IMR-90 (cell line): ENCODE measurements at regions of chr4 and their contacts with region 1.

Region 1: DNA sequence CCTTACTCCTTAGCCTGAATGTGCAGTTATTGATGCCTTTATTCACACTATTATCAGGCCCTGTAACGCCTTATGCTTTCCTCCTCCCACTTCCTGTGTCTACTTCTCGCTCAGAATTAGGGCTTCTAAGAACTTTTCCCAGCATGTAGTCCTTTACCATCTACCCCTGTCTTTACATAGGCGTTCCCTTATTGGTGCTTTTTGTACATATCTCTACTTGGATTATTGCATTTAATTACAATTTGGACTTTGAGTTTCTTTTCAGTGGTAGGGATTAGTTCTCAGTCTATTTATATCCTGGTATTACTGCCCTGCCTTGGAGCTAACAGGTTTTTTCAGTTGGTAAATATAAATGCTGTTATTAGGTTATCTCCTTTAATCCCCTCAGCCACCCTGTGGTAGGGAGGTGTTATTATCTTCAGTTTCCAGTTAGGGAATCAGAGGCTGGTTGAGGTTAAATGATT is 84.0 kb downstream of the RBPJ start:
- DNase-seq: no peak
- ATAC-seq: no peak
- H3K4me3 ChIP-seq: no peak overlapping the region
- H3K27ac ChIP-seq: no peak overlapping the region
- H3K4me1 ChIP-seq: no peaks in the 10 kb centered on the region; the same call in 1 of the 2 replicates
- H3K27me3 ChIP-seq: no peaks in the 10 kb centered on the region
- CTCF ChIP-seq: no peak
- POLR2A ChIP-seq: no peak
- RAD21 ChIP-seq: no peak

Region 2: DNA sequence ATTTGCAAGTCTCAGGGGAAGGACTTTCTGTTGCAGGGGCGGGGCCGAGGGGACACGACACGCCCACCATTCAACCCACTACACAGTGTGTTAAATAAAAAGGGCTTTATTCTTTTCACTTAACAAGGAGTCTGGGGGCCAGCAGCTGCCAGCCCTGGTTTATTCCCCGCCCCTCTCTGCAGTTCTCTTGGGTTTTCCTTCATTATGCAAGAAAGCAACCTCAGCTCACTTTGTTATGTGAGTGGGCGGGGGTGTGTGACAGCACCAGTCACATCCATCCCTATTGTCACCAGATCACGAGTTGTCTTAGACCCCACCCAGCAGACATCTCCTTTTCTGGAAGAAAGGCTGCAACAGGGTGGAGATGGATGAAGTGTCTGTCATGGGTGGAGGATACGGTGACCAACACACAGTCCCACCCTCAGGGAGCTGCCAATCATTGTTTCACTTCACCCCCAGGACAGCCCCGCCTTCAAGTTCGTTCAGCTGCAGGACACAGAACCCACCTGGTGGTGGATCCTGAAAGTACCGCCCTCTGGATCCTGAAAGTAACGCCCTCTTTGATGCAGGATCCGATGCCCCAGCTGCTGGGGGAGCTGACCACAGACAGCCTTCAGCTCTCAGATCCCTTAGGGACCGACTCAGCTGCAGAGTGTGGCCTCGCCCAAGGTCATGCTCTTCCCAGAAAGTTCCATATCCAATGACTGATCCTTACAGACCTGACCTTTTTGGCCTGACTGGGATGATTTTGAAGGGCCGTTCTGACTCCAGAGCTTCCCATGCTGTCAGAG is 411.2 kb before region 1 on chr4:
- CTCF ChIA-PET with region 1: no interaction called
- POLR2A ChIA-PET with region 1: no interaction called
- dilution Hi-C with region 1: no loop called
- in situ Hi-C with region 1: loop called (anchors 5 kb)
- intact Hi-C with region 1: no loop called
- DNase-seq: no peak
- ATAC-seq: no peak
- H3K4me3 ChIP-seq: no peak overlapping the region
- H3K27ac ChIP-seq: no peak overlapping the region
- H3K4me1 ChIP-seq: 0 out of 2 replicates have a peak, but pooled peaks cover 2% of the 10 kb centered on the region
- H3K27me3 ChIP-seq: no peaks in the 10 kb centered on the region
- CTCF ChIP-seq: 0 out of 2 replicates have a peak, but pooled peaks have one; percentile 8
- POLR2A ChIP-seq: no peak
- RAD21 ChIP-seq: no peak

Region 3: GRCh38 chr4:26028793-26029567 is 375.8 kb before region 1 on chr4:
- CTCF ChIA-PET with region 1: no interaction called
- POLR2A ChIA-PET with region 1: no interaction called
- dilution Hi-C with region 1: no loop called
- in situ Hi-C with region 1: loop called (anchors 10 kb)
- intact Hi-C with region 1: no loop called
- DNase-seq: peak; percentile 58
- ATAC-seq: peak; percentile 79
- H3K4me3 ChIP-seq: no peak overlapping the region
- H3K27ac ChIP-seq: no peak overlapping the region
- H3K4me1 ChIP-seq: peaks cover 19% of the 10 kb centered on the region
- H3K27me3 ChIP-seq: peaks cover 3% of the 10 kb centered on the region
- CTCF ChIP-seq: peak; percentile 77
- POLR2A ChIP-seq: no peak
- RAD21 ChIP-seq: peak; percentile 93

Region 4: DNA sequence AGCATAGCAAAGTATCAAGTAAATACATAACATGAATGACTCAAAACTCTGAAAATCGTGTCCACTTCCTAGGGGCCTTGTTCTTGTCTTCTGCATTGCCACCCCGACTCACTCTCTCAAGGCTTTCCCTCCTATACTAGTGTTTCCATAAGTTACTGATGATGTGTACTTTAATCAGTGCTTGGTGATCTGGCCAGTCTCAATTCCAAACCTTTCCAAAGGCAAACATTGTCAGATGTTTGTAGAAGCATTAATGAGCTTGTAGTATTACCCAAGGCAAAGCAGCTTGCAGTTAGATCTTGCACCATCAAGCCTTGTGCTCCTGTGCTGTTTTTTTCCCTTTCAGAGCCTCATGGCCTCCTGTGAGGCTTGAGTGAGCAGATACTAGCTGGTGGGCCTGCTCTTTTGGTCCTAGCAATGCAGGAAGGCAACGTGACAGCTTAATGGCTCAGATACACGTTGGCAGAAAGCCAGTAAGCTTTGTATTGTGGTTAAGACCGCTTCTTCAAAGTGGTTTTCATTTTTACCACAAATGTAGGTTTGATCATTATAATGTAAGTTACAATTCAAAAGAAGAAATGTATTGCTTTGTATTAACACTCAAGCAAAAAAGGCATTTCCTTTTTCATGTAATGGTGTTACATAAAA is 32.1 kb before region 1 on chr4:
- CTCF ChIA-PET with region 1: no interaction called
- POLR2A ChIA-PET with region 1: interaction called, 11 read pairs
- dilution Hi-C with region 1: no loop called
- in situ Hi-C with region 1: no loop called
- intact Hi-C with region 1: no loop called
- DNase-seq: peak; percentile 77
- ATAC-seq: peak; percentile 59
- H3K4me3 ChIP-seq: no peak overlapping the region
- H3K27ac ChIP-seq: peak overlapping the region; percentile 11; the same call in 1 of the 2 replicates
- H3K4me1 ChIP-seq: peaks cover 20% of the 10 kb centered on the region
- H3K27me3 ChIP-seq: no peaks in the 10 kb centered on the region
- CTCF ChIP-seq: no peak
- POLR2A ChIP-seq: no peak
- RAD21 ChIP-seq: no peak

Region 5: GRCh38 chr4:26632916-26633315 is 228.1 kb after region 1 on chr4:
- CTCF ChIA-PET with region 1: no interaction called
- POLR2A ChIA-PET with region 1: no interaction called
- dilution Hi-C with region 1: no loop called
- in situ Hi-C with region 1: no loop called
- intact Hi-C with region 1: no loop called
- DNase-seq: no peak
- ATAC-seq: no peak
- H3K4me3 ChIP-seq: no peak overlapping the region
- H3K27ac ChIP-seq: no peak overlapping the region
- H3K4me1 ChIP-seq: no peaks in the 10 kb centered on the region
- H3K27me3 ChIP-seq: no peaks in the 10 kb centered on the region
- CTCF ChIP-seq: no peak
- POLR2A ChIP-seq: no peak
- RAD21 ChIP-seq: no peak